Ascending aorta (tissue), 2 donors: ENCODE measurements at regions of chr16 and their contacts with region 1.

Region 1: DNA sequence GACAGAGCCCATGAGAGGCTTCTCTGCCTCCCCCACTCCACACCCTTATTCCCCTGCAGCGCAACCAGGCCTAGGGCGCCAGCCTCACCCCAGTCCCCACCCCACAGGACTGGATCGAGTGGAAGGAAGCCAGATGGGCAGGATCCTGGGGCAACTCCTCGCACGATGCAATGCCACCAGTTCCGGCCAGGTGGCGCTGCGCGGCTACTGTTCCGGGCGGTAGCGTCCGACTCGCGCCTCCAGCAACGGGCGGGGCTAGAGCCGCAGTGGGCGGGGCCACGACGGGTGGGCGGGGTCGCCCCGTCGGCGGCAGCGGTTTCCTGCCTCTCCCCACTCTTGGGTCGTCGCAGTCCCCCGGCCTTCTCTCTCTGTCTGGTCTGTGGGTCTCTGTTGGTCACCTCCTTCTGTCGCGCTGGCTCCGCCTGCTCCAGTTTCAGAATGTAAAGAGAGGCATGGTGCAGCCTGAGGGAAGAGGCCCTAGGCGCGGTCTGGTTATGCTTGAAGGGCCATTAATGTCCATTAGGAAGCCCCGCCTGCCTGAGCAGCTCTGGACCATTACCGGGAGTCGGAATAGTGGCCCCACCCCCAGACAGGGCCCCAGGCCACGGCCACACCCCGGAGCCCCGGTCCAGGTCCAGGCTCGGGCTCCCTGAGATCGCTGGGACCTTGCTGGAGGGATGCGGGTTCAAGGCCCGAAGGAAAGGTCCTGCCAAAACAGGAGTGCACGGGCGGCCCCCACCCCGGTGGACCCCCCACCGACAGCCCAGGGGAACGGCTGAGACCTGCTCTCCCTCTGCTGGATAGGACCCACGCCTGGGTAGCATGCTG is 3.4 kb upstream of the NHERF2 start:
- DNase-seq: peak; percentile 75 to 96
- H3K4me3 ChIP-seq: peak overlapping the region; percentile 35 to 58
- H3K27ac ChIP-seq: peak overlapping the region; percentile 66 to 73
- H3K4me1 ChIP-seq: peaks cover 17 to 31% of the 10 kb centered on the region in 2 donors
- H3K27me3 ChIP-seq: no peaks in the 10 kb centered on the region
- CTCF ChIP-seq: peak; percentile 98 to 99 (median 98)

Region 2: GRCh38 chr16:2035431-2036220 is 12.3 kb after region 1 on chr16:
- intact Hi-C with region 1: loop called (anchors 1 kb)
- DNase-seq: peak in 1 of 2 donors; percentile 85
- H3K4me3 ChIP-seq: peak overlapping the region; percentile 47 to 53
- H3K27ac ChIP-seq: peak overlapping the region; percentile 83 to 96
- H3K4me1 ChIP-seq: peaks cover 23 to 46% of the 10 kb centered on the region in 2 donors
- H3K27me3 ChIP-seq: no peaks in the 10 kb centered on the region
- CTCF ChIP-seq: no peak

Region 3: GRCh38 chr16:2047330-2048115 is 24.2 kb after region 1 on chr16 and contains the starts of genes NTHL1 and TSC2:
- intact Hi-C with region 1: loop called (anchors 1 kb)
- DNase-seq: peak; percentile 88 to 98
- H3K4me3 ChIP-seq: peak within 1 kb of the TSS; percentile 94 to 98
- H3K27ac ChIP-seq: peak within 1 kb of the TSS; percentile 62 to 63
- H3K4me1 ChIP-seq: peaks cover 4 to 20% of the 10 kb centered on the region in 2 donors
- H3K27me3 ChIP-seq: no peaks in the 10 kb centered on the region
- CTCF ChIP-seq: peak in 2 of 3 experiments; percentile 23 to 43
- total RNA-seq, gene NTHL1: 59.5 TPM
- total RNA-seq, gene TSC2: 258 TPM

Region 4: DNA sequence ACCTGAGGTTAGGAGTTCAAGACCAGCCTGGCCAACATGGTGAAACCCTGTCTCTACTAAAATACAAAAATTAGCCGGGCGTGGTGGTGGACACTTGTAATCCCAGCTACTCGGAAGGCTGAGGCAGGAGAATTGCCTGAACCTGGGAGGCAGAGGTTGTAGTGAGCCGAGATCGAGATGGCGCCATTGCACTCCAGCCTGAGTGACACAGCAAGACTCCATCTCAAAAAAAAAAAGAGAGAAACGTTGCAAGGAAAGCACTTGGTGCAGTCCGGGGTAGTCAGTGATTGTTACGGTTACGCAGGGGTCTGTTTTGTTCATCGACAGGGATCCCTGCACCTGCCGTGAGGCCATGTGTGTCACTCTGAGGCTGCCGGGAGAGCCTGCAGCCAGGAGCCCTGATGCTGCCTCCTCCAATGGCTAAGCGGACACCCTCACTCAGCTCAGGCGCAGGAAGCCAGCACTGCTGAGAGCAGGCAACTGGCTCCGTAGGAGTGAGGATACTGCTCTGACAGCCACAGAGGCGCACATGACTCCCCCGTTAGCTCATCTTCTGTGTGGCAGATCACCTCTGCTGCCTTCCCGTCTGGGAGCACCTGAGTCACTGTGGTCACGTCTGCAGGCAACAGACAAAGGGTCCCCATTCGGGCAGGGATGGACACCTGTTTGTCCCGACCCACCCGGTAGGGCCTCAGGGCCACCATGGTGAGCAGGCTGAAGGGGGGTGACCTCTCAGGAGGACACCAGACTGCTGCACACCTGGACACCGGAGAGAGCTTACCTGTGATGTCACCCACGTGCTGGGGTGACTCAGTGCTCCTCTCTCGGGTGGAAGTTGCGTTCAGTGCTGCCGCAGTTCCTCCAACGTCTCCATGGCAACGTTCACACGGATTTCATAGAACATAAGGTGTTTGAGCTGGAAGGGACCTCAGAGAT is 119.9 kb after region 1 on chr16:
- intact Hi-C with region 1: loop called (anchors 2 kb)
- DNase-seq: no peak
- H3K4me3 ChIP-seq: no peak overlapping the region
- H3K27ac ChIP-seq: no peak overlapping the region
- H3K4me1 ChIP-seq: peaks cover 0 to 1% of the 10 kb centered on the region in 2 donors
- H3K27me3 ChIP-seq: no peaks in the 10 kb centered on the region
- CTCF ChIP-seq: no peak

Region 5: GRCh38 chr16:2251483-2252240 is 228.3 kb after region 1 on chr16 and contains the start of gene ECI1:
- intact Hi-C with region 1: loop called (anchors 10 kb)
- DNase-seq: peak; percentile 74 to 98
- H3K4me3 ChIP-seq: peak within 1 kb of the TSS; percentile 80 to 86
- H3K27ac ChIP-seq: peak within 1 kb of the TSS; percentile 82 to 88
- H3K4me1 ChIP-seq: peaks cover 10 to 11% of the 10 kb centered on the region in 2 donors
- H3K27me3 ChIP-seq: no peaks in the 10 kb centered on the region
- CTCF ChIP-seq: peak; percentile 73 to 76 (median 74)
- total RNA-seq, gene ECI1: 10.9 TPM